ENCODE measurements at regions of chr1 and their contacts with region 1.

Region 1: DNA sequence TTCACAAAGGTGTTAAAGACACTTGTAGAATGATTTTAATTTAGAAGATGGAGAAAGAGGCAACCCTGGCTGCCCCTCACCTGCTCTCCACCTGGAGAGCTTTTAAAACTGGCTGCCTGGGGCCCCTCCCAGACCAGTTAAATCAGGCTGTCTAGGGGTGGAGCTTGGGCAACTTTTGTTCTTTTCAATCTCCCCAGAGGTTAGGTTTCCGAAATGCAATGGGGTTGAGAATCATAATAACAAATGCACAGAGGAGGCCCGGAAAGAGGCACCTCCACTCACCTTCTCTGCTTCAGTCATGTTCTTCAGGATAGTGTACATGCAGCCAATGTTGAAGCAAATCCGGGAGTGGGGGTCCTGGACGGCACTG is 400 bp downstream of the NCF2 start:
- DNase-seq: no peak
- H3K4me3 Mint-ChIP-seq: no peak overlapping the region
- H3K27ac Mint-ChIP-seq: no peak overlapping the region
- H3K4me1 Mint-ChIP-seq: peaks cover 32% of the 10 kb centered on the region
- H3K27me3 Mint-ChIP-seq: no peaks in the 10 kb centered on the region
- CTCF ChIP-seq: no peak

Region 2: DNA sequence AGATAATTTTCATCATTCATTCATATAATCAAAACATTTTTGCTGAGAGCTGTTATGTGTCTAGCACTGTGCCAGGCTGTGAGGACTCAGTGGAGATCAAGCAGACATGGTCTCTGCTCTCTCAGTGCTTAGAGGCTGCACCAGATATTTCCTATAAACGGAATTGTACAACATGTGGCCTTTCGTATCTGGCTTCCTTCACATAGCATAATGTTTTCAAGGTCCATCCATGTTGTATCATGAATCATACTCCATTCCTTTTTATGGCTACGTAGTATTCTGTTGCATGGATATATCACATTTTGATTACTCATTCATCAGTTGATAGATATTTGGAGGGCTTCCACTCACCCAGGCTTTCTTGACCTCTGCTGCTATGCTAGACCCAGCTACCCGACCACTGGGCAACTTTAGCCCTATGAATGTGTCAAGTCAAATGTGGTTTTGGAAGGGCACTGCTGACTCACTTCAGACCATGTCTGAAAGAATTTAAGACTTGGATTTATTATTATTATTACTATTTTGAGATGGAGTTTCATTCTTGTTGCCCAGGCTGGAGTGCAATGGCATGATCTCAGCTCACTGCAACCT is 18.1 kb before region 1 on chr1:
- CTCF ChIA-PET with region 1: no interaction called
- intact Hi-C with region 1: no loop called
- DNase-seq: no peak
- H3K4me3 Mint-ChIP-seq: no peak overlapping the region
- H3K27ac Mint-ChIP-seq: no peak overlapping the region
- H3K4me1 Mint-ChIP-seq: peaks cover 26% of the 10 kb centered on the region
- H3K27me3 Mint-ChIP-seq: no peaks in the 10 kb centered on the region
- CTCF ChIP-seq: no peak

Region 3: GRCh38 chr1:183600136-183600535 is 10.3 kb after region 1 on chr1:
- CTCF ChIA-PET with region 1: interaction called, 14 read pairs
- intact Hi-C with region 1: no loop called
- DNase-seq: no peak
- H3K4me3 Mint-ChIP-seq: no peak overlapping the region
- H3K27ac Mint-ChIP-seq: no peak overlapping the region
- H3K4me1 Mint-ChIP-seq: no peaks in the 10 kb centered on the region
- H3K27me3 Mint-ChIP-seq: peaks cover 16% of the 10 kb centered on the region
- CTCF ChIP-seq: no peak

Measured in Calu3 (cell line).